ENCODE measurements at regions of chr11 and their contacts with region 1.

Region 1: DNA sequence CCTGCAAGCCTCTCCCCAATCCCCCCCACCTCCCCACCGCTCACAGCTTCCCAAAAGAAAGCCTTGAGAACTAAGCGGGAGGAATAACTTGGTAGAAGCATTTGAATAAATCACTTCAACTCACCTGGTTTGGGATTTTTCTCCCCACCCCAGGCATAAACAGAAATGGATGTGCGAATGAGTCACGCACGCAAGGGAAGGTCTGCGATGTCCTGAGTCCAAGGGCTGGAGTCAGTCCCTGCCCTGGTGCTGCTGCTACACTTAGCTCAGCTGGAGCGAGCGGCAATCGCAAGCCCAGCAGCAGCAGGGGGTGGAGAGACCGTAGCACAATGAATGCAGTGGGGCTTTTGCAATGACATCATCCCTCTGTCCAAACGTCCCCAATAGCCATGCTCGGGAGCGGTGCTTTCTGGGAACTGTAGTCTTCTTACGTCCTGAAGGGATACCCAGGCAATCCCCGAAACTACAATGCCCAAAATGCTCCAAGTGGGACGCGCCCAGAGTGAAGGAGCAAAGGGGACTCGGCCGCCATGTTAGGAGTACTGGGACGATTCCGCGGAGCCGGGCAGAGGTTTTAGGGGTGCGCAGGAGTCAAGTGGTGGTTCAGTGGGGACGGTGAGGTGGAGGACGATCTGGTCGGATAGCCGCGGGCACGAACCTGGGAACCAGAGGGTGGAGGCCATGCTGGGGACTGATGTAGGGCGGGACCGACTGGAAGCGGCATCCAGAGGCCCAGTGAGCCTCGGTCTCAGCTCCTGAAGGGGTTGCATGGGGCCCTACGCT is at the start of gene RAB30:
- DNase-seq: peak; percentile 100
- ATAC-seq: peak; percentile 96
- H3K4me3 ChIP-seq: peak within 1 kb of the TSS; percentile 64
- H3K27ac ChIP-seq: peak within 1 kb of the TSS; percentile 93
- H3K4me1 ChIP-seq: peaks cover 7% of the 10 kb centered on the region
- H3K27me3 ChIP-seq: no peaks in the 10 kb centered on the region
- CTCF ChIP-seq: no peak
- POLR2A ChIP-seq: peak; percentile 95
- RAD21 ChIP-seq: peak; percentile 49
- total RNA-seq, gene RAB30: 14.4 and 25.6 TPM in 2 replicates

Region 2: DNA sequence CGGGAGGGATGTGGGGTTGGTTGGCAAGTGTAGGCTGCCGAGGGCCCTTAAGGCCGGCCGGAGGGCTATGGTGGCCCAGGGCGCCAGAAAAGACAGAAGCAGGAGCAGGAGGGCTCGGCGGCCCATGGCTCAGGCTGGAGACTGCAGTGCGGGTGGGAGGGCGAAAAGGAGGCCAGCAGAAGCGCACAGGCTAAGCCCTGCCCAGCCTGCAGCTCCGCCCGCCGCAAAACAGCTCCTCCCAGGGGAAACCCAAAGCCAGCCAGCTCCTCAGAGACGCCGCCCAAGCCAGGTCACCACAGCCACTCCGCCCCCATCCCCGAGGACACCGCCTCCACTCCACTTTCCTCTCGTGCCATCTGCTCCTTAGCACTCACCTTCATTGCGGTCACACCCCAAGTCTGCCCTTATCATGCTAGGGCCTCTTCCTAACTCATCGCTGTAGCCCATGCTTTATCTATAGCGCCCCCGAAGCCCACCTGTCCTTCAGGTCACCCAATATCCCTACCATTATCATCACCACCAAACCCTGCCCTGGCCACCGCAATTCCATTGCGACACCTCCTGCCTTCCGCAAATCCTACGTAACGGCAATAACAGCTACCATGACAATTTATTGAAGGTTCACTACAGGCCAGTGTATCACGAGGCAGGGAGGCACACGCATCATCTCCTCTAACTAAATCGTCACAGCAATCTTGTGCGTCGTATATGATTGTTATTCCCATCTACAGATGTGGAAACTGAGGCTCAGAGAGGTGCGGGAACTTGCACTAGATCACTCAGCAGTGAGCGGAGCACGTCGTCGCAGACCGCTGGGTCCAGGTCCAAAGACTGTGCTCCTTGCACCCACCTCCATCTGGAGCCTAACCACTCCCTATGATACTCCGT is 171.2 kb before region 1 on chr11 and contains the start of gene PRCP:
- CTCF ChIA-PET with region 1: interaction called, 3 read pairs
- POLR2A ChIA-PET with region 1: no interaction called
- dilution Hi-C with region 1: no loop called
- in situ Hi-C with region 1: loop called (anchors 10 kb)
- intact Hi-C with region 1: no loop called
- DNase-seq: peak; percentile 85
- ATAC-seq: peak; percentile 92
- H3K4me3 ChIP-seq: peak within 1 kb of the TSS; percentile 64
- H3K27ac ChIP-seq: peak within 1 kb of the TSS; percentile 75
- H3K4me1 ChIP-seq: 0 out of 2 replicates have a peak, but pooled peaks cover 1% of the 10 kb centered on the region
- H3K27me3 ChIP-seq: no peaks in the 10 kb centered on the region
- CTCF ChIP-seq: no peak
- POLR2A ChIP-seq: peak; percentile 63
- RAD21 ChIP-seq: no peak
- total RNA-seq, gene PRCP: 31.7 TPM in 2 replicates

Region 3: DNA sequence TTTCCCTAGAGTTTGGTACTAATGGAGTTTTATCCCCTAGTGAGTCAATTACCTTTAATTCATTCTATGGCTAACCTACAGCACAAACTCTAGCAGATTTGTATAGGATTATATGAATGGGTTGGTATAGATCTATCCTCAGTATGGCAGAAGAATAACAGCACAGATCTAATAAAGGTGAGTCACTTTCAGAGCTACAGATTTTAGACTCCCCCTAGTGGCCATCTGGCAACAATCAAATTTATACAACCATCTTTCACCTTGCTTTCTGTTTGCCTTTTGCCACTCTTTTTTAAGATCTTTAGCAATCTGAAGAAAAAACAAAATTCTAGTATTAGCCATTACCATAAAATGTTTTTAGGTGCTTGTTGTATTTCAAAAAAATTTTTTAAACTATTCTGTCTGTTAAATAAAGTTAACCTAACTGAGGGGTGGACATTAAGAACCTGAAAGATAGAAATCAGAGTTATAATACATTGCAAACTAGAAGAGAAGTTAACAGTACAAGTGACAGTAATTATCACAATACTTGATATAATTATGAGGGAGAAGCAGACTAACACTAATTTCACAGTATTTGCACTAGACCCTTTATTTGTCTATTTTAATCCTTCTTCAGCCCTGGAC is 144.4 kb before region 1 on chr11:
- CTCF ChIA-PET with region 1: no interaction called
- POLR2A ChIA-PET with region 1: no interaction called
- dilution Hi-C with region 1: no loop called
- in situ Hi-C with region 1: no loop called
- intact Hi-C with region 1: loop called (anchors 1 kb)
- DNase-seq: peak; percentile 64
- ATAC-seq: peak; percentile 84
- H3K4me3 ChIP-seq: no peak overlapping the region
- H3K27ac ChIP-seq: no peak overlapping the region
- H3K4me1 ChIP-seq: no peaks in the 10 kb centered on the region
- H3K27me3 ChIP-seq: no peaks in the 10 kb centered on the region
- CTCF ChIP-seq: peak; percentile 69
- POLR2A ChIP-seq: no peak
- RAD21 ChIP-seq: peak; percentile 52

Region 4: GRCh38 chr11:83051760-83052671 is 19.7 kb before region 1 on chr11:
- CTCF ChIA-PET with region 1: no interaction called
- POLR2A ChIA-PET with region 1: interaction called, 6 read pairs
- dilution Hi-C with region 1: no loop called
- in situ Hi-C with region 1: no loop called
- intact Hi-C with region 1: loop called (anchors 1 kb)
- DNase-seq: peak; percentile 98
- ATAC-seq: peak; percentile 83
- H3K4me3 ChIP-seq: no peak overlapping the region
- H3K27ac ChIP-seq: peak overlapping the region; percentile 91
- H3K4me1 ChIP-seq: peaks cover 23% of the 10 kb centered on the region
- H3K27me3 ChIP-seq: no peaks in the 10 kb centered on the region
- CTCF ChIP-seq: no peak
- POLR2A ChIP-seq: no peak
- RAD21 ChIP-seq: no peak

Region 5: DNA sequence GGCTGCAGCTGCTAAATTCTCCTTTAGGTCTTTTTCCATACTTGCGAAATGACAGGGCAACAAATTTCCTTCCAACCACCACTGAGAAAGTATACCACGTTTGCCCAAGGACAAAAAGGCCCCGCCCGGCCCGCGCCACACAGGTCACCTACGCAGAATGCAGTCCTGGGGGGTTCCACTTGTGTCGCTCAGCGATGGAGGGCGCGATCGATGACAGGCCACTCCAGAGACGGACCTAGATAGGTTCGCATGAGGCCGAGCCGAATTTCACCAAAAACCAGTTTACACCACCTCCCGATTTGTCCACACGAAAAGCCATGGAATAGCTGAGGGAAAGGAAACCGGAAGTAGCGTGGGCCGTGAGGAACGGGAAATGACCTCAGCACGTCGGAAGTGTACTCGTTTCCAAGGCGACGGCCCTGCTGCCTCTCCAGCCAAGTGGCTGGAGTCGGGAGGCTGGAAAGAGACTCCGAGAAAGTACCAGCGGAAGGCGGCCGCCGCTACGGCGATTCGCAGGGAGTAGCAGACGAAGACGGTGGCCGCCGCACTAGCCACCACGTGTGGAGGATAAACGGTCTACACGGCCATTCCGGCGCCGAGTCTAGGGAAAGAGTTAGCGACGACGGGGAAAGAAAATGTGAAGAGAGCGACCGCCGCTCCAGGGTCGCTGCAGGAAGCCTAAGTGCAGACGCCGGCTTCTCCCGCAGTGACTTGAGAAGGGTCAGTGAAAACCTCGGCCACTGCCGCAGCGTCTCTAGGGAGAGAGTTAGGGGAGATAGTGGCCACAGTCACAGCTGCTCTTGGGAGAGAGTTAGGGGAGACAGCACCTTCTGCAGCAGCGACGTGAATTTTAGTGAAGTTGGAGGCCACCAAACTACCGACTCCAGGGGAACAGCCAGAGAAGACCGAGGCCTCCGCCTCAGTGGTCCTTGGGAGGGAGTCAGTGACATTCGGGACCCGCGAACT is 121.8 kb after region 1 on chr11 and contains the start of gene ANKRD42:
- CTCF ChIA-PET with region 1: no interaction called
- POLR2A ChIA-PET with region 1: no interaction called
- dilution Hi-C with region 1: no loop called
- in situ Hi-C with region 1: no loop called
- intact Hi-C with region 1: loop called (anchors 1 kb)
- DNase-seq: peak; percentile 96
- ATAC-seq: peak; percentile 81
- H3K4me3 ChIP-seq: peak within 1 kb of the TSS; percentile 85
- H3K27ac ChIP-seq: peak within 1 kb of the TSS; percentile 99
- H3K4me1 ChIP-seq: peaks cover 4% of the 10 kb centered on the region; the same call in 1 of the 2 replicates
- H3K27me3 ChIP-seq: no peaks in the 10 kb centered on the region
- CTCF ChIP-seq: no peak
- POLR2A ChIP-seq: peak; percentile 86
- RAD21 ChIP-seq: peak; percentile 9; the same call in 1 of the 2 replicates
- total RNA-seq, gene ANKRD42: 5.6 and 6.9 TPM in 2 replicates